HEK293 (cell line): ENCODE measurements at regions of chr2 and their contacts with region 1.

Region 1: GRCh38 chr2:234288974-234289455 is 207.9 kb downstream of the ARL4C start:
- H3K4me3 ChIP-seq: no peak overlapping the region
- H3K27ac ChIP-seq: no peak overlapping the region
- H3K4me1 ChIP-seq: no peaks in the 10 kb centered on the region
- CTCF ChIP-seq: peak; percentile 69

Region 2: DNA sequence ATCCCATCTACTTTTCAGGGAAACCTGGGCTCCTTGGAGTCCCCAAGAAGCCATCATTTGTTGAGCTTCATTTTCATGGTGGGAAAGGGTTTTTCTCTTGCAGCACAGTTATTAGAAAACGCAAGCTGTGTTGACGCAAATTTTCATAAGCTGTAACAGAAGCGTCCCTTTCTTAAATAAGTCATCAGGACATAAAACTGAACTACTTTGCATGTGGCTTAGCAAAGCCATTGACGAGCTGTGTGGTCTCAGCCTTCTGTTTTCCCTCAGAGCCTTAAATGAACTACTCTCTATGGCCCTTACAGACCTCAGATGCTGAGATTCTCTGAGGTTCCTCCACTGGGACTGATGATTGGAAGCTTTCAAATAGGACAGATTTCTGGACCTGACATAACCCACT is 122.8 kb after region 1 on chr2:
- CTCF ChIA-PET with region 1: interaction called, 12 read pairs
- POLR2A ChIA-PET with region 1: no interaction called
- H3K4me3 ChIP-seq: no peak overlapping the region
- H3K27ac ChIP-seq: no peak overlapping the region
- H3K4me1 ChIP-seq: no peaks in the 10 kb centered on the region
- CTCF ChIP-seq: no peak

Region 3: GRCh38 chr2:234500394-234501006 is 211.5 kb after region 1 on chr2:
- CTCF ChIA-PET with region 1: interaction called, 16 read pairs
- POLR2A ChIA-PET with region 1: interaction called, 5 read pairs
- H3K4me3 ChIP-seq: no peak overlapping the region
- H3K27ac ChIP-seq: no peak overlapping the region
- H3K4me1 ChIP-seq: peaks cover 12% of the 10 kb centered on the region
- CTCF ChIP-seq: no peak